WTC11 (cell line): ENCODE measurements at regions of chrX and their contacts with region 1.

Region 1: GRCh38 chrX:109624641-109625616 is at the start of gene KCNE5:
- DNase-seq: peak; percentile 70
- ATAC-seq: peak; percentile 87
- H3K4me3 Mint-ChIP-seq: peak within 1 kb of the TSS; percentile 49
- H3K27ac Mint-ChIP-seq: no peak within 1 kb of the TSS
- H3K4me1 Mint-ChIP-seq: peaks cover 7% of the 10 kb centered on the region
- H3K27me3 Mint-ChIP-seq: peaks cover 18% of the 10 kb centered on the region
- CTCF ChIP-seq: no peak
- total RNA-seq, gene KCNE5: 2.2 to 3.4 TPM (median 2.7 TPM) in 3 replicates

Region 2: GRCh38 chrX:109475174-109475891 is 149.6 kb before region 1 on chrX:
- CTCF ChIA-PET with region 1: interaction called, 12 read pairs
- POLR2A ChIA-PET with region 1: no interaction called
- DNase-seq: peak; percentile 57
- ATAC-seq: peak; percentile 75
- H3K4me3 Mint-ChIP-seq: no peak overlapping the region
- H3K27ac Mint-ChIP-seq: no peak overlapping the region
- H3K4me1 Mint-ChIP-seq: peaks cover 19% of the 10 kb centered on the region
- H3K27me3 Mint-ChIP-seq: no peaks in the 10 kb centered on the region
- CTCF ChIP-seq: no peak

Region 3: GRCh38 chrX:109536439-109537336 is 88.2 kb before region 1 on chrX and contains the start of gene NXT2:
- CTCF ChIA-PET with region 1: interaction called, 5 read pairs
- POLR2A ChIA-PET with region 1: interaction called, 10 read pairs
- DNase-seq: peak; percentile 83
- ATAC-seq: peak; percentile 99
- H3K4me3 Mint-ChIP-seq: peak within 1 kb of the TSS; percentile 97
- H3K27ac Mint-ChIP-seq: peak within 1 kb of the TSS; percentile 100
- H3K4me1 Mint-ChIP-seq: peaks cover 4% of the 10 kb centered on the region; the same call in 1 of the 2 replicates
- H3K27me3 Mint-ChIP-seq: peaks cover 31% of the 10 kb centered on the region
- CTCF ChIP-seq: no peak
- total RNA-seq, gene NXT2: 9.9 to 10.4 TPM (median 10.4 TPM) in 3 replicates

Region 4: GRCh38 chrX:109635176-109635575 is 10.2 kb after region 1 on chrX:
- CTCF ChIA-PET with region 1: interaction called, 14 read pairs
- POLR2A ChIA-PET with region 1: no interaction called
- DNase-seq: peak; percentile 9
- ATAC-seq: peak; percentile 70
- H3K4me3 Mint-ChIP-seq: no peak overlapping the region
- H3K27ac Mint-ChIP-seq: no peak overlapping the region
- H3K4me1 Mint-ChIP-seq: no peaks in the 10 kb centered on the region; the same call in 1 of the 2 replicates
- H3K27me3 Mint-ChIP-seq: no peaks in the 10 kb centered on the region
- CTCF ChIP-seq: no peak